Activated naive CD4-positive, alpha-beta T cell treated with anti-CD3 and anti-CD28 coated beads for 36 hours (primary cell): ENCODE measurements at regions of chr22 and their contacts with region 1.

Region 1: DNA sequence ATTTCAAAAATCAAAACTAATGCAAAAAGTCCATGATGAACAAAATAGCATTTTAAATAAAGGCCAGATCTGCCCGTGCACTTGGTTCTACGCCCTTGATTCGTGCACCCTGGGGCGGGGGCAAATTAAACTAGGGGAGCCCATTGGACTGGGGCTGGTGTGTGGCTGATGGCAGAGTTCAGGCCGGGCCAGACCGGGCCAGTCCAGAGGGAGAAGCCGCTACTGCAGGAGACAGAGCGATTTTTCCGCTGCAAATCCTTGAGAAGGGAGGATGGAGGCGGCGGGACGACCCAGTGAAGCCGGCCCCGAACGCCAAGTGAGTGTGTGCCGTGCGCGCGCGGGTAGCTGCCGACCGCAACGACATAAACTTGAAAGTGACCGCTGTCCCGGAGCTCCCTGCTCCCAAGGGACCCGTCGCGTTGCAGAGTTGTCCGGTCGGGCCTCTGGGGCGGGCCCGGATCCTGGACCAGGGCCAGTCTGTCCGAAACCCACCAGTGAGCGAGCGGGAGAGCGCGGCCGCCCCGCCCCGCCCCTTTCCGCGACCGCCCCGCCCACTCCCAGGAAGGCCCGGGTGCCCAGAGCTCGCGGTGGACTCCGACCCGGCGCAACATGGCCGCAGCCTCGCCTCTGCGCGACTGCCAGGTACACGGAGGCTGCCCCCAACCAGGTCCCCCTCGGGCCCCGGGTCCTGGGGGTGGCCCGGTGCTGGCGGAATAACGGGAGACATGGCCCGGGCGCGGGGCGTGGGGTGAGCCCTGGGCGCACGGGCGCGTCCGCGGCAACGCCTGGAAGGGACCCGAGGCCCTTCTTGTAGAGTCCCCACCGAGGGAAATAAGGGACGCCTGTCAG is at the start of gene TTC38:
- DNase-seq: peak; percentile 42
- H3K4me3 Mint-ChIP-seq: peak within 1 kb of the TSS; percentile 85
- H3K27ac Mint-ChIP-seq: no peak within 1 kb of the TSS
- H3K4me1 Mint-ChIP-seq: peaks cover 8% of the 10 kb centered on the region
- H3K27me3 Mint-ChIP-seq: peaks cover 32% of the 10 kb centered on the region
- total RNA-seq, gene TTC38: 6.1 to 7.2 TPM

Region 2: DNA sequence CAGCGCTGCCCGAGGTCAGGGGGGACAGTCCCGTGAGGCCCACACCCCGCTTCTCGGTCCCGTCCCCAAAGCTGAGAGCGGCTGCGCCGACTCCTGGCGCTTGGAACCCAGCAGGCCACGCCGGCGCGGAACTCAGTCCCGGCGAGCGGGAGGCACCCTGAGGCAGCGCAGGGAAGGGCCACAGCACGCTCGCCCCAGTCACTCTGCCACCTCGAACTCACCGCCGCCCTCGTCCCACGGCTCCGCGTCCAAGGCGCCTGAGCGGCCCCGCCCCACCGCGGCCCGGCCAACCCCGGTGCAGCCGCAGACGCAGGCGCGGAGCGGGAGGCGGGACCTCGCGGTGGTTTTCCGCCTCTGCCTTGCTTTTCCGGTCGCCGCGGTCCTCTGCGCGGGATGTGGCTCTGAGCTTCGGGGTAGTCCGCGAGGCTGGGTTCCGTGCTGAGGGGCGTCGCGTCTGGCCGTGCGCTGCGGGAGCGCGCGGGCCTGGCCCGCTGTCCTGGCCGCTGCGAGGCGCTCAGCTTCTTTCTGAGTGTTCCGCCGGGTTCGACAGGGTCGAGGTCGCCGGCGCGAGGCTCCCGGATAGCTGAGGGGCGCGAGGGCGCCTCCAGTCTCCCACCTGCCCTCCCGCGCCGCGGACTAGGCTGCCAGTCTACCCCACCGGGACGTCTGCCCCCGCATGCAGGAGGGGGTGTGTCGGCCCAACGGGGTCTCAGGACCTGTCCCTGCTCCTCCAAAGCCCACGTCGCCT is 17.4 kb before region 1 on chr22 and contains the start of gene CDPF1:
- CTCF ChIA-PET with region 1: no interaction called
- intact Hi-C with region 1: loop called (anchors 2 kb)
- DNase-seq: peak; percentile 91
- H3K4me3 Mint-ChIP-seq: peak within 1 kb of the TSS; percentile 80
- H3K27ac Mint-ChIP-seq: peak within 1 kb of the TSS; percentile 41
- H3K4me1 Mint-ChIP-seq: peaks cover 26% of the 10 kb centered on the region
- H3K27me3 Mint-ChIP-seq: no peaks in the 10 kb centered on the region
- total RNA-seq, gene CDPF1: 6.9 to 8.0 TPM